Activated CD8-positive, alpha-beta T cell treated with anti-CD3 and anti-CD28 coated beads for 36 hours (primary cell): ENCODE measurements at regions of chr2 and their contacts with region 1.

Region 1: DNA sequence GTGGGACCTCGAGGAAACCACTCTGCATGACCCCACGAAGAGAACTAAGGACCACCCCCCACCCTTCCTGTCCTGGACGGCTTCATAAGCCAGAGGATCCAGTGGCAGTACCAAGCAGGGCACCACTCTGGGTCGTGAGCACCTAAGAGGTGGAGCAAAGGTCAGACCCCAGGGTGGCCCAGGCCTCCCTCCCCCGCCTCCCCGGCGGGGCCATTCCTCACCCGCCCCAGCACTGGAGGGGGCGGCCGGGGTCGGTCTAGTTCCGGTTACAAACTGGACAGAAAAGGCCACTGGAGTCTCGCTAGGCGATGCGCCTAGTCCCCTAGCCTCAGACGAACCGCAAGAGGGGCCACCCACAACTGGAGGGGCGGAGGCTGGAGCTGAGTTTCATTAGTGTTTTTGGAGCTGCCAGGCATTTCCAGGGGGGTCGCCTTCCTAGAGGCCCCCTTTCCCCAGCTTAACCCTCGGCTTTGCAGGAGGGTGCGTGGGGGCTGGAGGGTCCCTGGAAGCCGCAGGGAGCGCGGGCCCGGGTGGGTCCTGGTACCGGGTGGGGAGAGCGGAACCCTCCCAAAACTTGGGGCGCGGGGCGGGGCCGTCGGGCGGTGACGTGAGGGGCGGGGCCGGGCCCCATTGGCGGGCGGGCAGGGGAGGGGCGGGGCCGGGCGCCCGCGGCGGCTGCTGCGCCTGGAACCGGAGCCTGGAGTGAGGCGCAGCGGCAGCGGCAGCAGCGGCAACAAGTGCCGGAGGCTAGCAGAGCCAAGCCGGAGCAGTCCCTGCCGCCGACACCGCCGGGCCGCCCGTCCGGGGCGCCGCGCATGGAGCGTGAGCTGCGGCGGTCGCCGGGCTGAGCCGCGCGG is at the start of gene B3GNT2:
- DNase-seq: peak; percentile 86
- ATAC-seq: peak; percentile 66
- H3K4me3 Mint-ChIP-seq: peak within 1 kb of the TSS; percentile 96
- H3K27ac Mint-ChIP-seq: peak within 1 kb of the TSS; percentile 95
- H3K4me1 Mint-ChIP-seq: peaks cover 22% of the 10 kb centered on the region
- H3K27me3 Mint-ChIP-seq: no peaks in the 10 kb centered on the region
- CTCF ChIP-seq: no peak
- total RNA-seq, gene B3GNT2: 44.3 to 45.5 TPM

Region 2: GRCh38 chr2:61538200-61538919 is 657.3 kb before region 1 on chr2 and contains the start of gene XPO1:
- CTCF ChIA-PET with region 1: no interaction called
- POLR2A ChIA-PET with region 1: interaction called, 4 read pairs
- intact Hi-C with region 1: loop called (anchors 5 kb)
- DNase-seq: peak; percentile 100
- ATAC-seq: peak; percentile 81
- H3K4me3 Mint-ChIP-seq: peak within 1 kb of the TSS; percentile 83
- H3K27ac Mint-ChIP-seq: peak within 1 kb of the TSS; percentile 100
- H3K4me1 Mint-ChIP-seq: peaks cover 27% of the 10 kb centered on the region
- H3K27me3 Mint-ChIP-seq: no peaks in the 10 kb centered on the region
- CTCF ChIP-seq: no peak
- total RNA-seq, gene XPO1: 208 to 221 TPM

Region 3: GRCh38 chr2:61993444-61994024 is 202.1 kb before region 1 on chr2:
- CTCF ChIA-PET with region 1: interaction called, 3 read pairs
- POLR2A ChIA-PET with region 1: no interaction called
- intact Hi-C with region 1: loop called (anchors 5 kb)
- DNase-seq: peak; percentile 46
- ATAC-seq: peak; percentile 71
- H3K4me3 Mint-ChIP-seq: no peak overlapping the region
- H3K27ac Mint-ChIP-seq: no peak overlapping the region
- H3K4me1 Mint-ChIP-seq: no peaks in the 10 kb centered on the region
- H3K27me3 Mint-ChIP-seq: no peaks in the 10 kb centered on the region
- CTCF ChIP-seq: peak; percentile 74

Region 4: DNA sequence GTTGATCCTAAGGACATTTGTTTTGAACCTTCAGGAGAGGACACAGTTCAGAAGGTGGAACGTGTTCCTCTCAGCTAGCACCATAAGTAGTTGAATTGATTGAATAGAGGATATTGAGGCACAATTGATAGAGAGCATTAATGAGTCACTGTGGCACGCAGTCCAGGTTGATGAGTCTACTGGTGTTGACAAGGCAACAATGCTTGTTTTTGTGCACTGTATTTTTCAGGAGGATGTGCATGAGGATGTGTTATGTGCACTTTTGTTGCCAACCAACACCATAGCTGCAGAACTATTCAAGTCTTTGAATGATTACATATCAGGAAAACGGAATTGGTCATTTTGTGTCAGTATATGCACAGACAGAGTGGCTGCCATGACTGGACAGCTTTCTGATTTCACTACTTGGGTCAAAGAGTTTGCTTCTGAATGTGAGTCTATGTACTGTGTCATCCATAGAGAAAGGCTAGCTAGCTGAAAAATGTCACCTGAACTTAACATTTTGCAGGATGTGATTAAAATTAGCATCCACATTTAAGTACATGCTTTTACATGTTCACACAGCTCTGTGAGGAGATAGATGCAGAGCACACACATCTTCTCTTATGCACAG is 139.8 kb before region 1 on chr2:
- CTCF ChIA-PET with region 1: no interaction called
- POLR2A ChIA-PET with region 1: no interaction called
- intact Hi-C with region 1: no loop called
- DNase-seq: no peak
- ATAC-seq: no peak
- H3K4me3 Mint-ChIP-seq: no peak overlapping the region
- H3K27ac Mint-ChIP-seq: no peak overlapping the region
- H3K4me1 Mint-ChIP-seq: peaks cover 17% of the 10 kb centered on the region
- H3K27me3 Mint-ChIP-seq: no peaks in the 10 kb centered on the region
- CTCF ChIP-seq: no peak

Region 5: DNA sequence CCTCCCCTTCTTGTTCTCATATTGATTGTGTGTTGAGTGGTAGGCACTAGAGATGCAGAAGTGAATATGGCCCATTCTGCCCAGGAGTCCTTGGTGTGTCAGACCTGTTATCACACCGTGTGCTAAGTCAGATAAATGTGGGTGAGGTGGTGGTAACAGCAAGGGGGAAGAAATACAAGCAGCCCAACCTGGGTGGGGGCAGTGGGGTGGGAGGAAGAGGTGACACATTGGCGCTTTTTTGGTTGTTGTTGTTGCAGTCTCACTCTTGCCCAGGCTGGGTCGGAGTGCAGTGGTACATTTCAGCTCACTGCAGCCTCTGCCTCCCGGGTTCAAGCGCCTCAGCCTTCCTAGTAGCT is 13.1 kb after region 1 on chr2:
- CTCF ChIA-PET with region 1: interaction called, 12 read pairs
- POLR2A ChIA-PET with region 1: interaction called, 37 read pairs
- intact Hi-C with region 1: no loop called
- DNase-seq: peak; percentile 79
- ATAC-seq: peak; percentile 80
- H3K4me3 Mint-ChIP-seq: no peak overlapping the region
- H3K27ac Mint-ChIP-seq: peak overlapping the region; percentile 82
- H3K4me1 Mint-ChIP-seq: peaks cover 92% of the 10 kb centered on the region
- H3K27me3 Mint-ChIP-seq: no peaks in the 10 kb centered on the region
- CTCF ChIP-seq: no peak

Region 6: GRCh38 chr2:62306751-62307468 is 111.3 kb after region 1 on chr2:
- CTCF ChIA-PET with region 1: interaction called, 12 read pairs
- POLR2A ChIA-PET with region 1: interaction called, 112 read pairs
- intact Hi-C with region 1: loop called (anchors 2 kb)
- DNase-seq: peak; percentile 84
- ATAC-seq: peak; percentile 28
- H3K4me3 Mint-ChIP-seq: peak overlapping the region; percentile 66
- H3K27ac Mint-ChIP-seq: peak overlapping the region; percentile 98
- H3K4me1 Mint-ChIP-seq: peaks cover 90% of the 10 kb centered on the region
- H3K27me3 Mint-ChIP-seq: peaks cover 2% of the 10 kb centered on the region
- CTCF ChIP-seq: no peak